Calu3 (cell line): ENCODE measurements at regions of chr1 and their contacts with region 1.

Region 1: DNA sequence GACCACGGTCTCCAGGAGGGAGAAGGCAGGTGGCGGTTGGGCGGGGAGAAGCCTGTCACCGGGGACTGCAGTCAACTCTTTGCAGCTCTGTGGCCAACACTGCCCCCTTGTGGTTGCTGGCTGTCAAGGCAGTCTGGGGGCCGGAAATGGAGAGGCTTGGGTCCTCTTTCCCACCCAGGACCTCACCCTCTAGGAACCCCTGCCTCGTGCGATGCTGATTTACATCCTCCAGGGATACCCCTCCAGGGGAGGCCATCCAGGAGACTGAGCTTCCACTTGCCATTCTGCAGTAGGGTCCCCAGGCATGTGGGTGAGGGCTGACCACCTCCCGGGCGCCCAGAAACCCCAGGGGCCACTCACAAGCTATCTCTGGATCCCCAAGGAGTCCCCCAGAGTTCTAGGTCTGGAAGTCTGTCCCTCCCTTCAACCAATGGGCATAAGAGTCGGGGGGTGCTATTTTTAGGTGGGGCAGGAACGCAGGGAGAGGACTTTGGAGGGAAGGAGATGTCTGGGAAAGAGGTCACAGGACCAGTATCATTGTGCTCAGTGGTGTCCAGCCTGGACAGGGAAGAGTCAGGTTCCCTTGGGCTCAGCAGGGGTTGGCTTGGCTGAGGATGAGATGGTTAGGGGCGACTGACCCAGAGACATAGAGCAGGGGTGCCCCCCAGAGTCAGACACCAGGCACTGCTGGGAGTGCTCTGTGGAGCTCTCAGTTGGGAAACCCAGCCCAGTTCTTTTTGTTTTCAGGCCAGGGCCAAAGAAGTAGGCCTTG is 7.1 kb upstream of the GPR61 start:
- DNase-seq: peak; percentile 82
- H3K4me3 Mint-ChIP-seq: no peak overlapping the region
- H3K27ac Mint-ChIP-seq: no peak overlapping the region
- H3K4me1 Mint-ChIP-seq: peaks cover 6% of the 10 kb centered on the region
- H3K27me3 Mint-ChIP-seq: peaks cover 42% of the 10 kb centered on the region
- CTCF ChIP-seq: peak; percentile 85

Region 2: DNA sequence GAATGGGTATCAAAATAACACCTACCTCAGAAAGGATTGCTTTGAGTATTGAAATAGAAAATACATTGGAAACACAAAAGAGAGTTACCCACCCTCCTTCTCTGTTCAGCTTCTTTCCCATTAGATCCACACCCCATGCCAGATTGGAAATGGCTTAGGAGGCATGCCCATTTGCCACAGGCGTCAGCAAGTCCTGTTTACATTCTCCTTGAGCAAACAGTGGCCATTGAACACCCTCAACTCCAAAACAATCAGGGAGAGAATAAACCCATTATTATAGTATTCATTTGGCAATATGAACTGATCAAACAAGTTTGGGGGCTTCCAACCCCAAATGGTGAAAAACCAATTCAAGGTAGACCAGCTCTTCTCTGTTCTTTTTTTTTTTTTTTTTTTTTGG is 416.2 kb before region 1 on chr1:
- CTCF ChIA-PET with region 1: no interaction called
- intact Hi-C with region 1: no loop called
- DNase-seq: no peak
- H3K4me3 Mint-ChIP-seq: no peak overlapping the region
- H3K27ac Mint-ChIP-seq: no peak overlapping the region
- H3K4me1 Mint-ChIP-seq: peaks cover 18% of the 10 kb centered on the region
- H3K27me3 Mint-ChIP-seq: peaks cover 41% of the 10 kb centered on the region
- CTCF ChIP-seq: no peak

Region 3: DNA sequence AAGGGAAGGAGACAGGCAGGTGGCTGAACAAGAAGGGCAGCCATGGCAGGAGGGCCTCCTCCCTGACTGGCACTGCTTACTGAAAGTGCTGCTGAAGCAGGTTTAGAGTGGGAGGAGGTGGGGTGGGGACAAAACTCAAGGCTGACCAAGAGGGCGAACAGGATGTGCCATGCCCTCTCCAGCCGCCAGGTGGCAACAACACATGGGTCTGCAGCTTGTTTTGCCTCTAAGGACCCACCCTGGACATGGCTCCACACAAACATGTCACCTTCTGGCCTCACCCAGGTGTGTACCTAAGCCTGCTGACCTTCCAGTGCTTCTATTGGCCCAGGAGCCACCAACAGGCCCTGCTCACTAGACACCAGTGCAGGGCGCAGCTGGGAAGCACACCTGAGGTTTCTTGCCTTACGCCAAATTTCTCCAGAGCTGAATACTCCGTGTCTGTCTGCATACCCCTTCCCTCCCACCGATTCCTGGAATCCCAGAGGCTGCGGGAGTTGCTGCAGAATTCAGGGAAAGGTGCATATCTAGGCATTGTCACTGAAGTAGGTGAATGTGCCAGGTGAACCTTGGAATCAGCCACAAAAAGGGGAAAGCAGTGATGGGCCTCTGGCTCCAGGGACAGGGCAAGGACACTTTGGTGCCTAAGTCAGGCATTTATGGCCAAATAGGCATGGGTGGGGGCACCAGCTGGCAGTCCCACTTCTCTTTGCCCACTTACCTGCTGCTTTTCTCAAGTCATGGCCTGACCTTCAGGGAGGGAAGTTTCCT is 254.9 kb before region 1 on chr1:
- CTCF ChIA-PET with region 1: interaction called, 4 read pairs
- intact Hi-C with region 1: loop called (anchors 2 kb)
- DNase-seq: peak; percentile 74
- H3K4me3 Mint-ChIP-seq: no peak overlapping the region
- H3K27ac Mint-ChIP-seq: peak overlapping the region; percentile 61
- H3K4me1 Mint-ChIP-seq: peaks cover 28% of the 10 kb centered on the region
- H3K27me3 Mint-ChIP-seq: no peaks in the 10 kb centered on the region
- CTCF ChIP-seq: peak; percentile 75

Region 4: GRCh38 chr1:109319114-109319513 is 213.4 kb before region 1 on chr1:
- CTCF ChIA-PET with region 1: no interaction called
- intact Hi-C with region 1: no loop called
- DNase-seq: no peak
- H3K4me3 Mint-ChIP-seq: no peak overlapping the region
- H3K27ac Mint-ChIP-seq: no peak overlapping the region
- H3K4me1 Mint-ChIP-seq: no peaks in the 10 kb centered on the region
- H3K27me3 Mint-ChIP-seq: no peaks in the 10 kb centered on the region
- CTCF ChIP-seq: no peak

Region 5: GRCh38 chr1:109426278-109427170 is 106.0 kb before region 1 on chr1 and contains the start of gene PSMA5:
- CTCF ChIA-PET with region 1: no interaction called
- intact Hi-C with region 1: loop called (anchors 2 kb)
- DNase-seq: peak; percentile 92
- H3K4me3 Mint-ChIP-seq: peak within 1 kb of the TSS; percentile 89
- H3K27ac Mint-ChIP-seq: peak within 1 kb of the TSS; percentile 89
- H3K4me1 Mint-ChIP-seq: peaks cover 22% of the 10 kb centered on the region
- H3K27me3 Mint-ChIP-seq: no peaks in the 10 kb centered on the region
- CTCF ChIP-seq: no peak
- total RNA-seq, gene PSMA5: 108 and 121 TPM in 2 replicates

Region 6: DNA sequence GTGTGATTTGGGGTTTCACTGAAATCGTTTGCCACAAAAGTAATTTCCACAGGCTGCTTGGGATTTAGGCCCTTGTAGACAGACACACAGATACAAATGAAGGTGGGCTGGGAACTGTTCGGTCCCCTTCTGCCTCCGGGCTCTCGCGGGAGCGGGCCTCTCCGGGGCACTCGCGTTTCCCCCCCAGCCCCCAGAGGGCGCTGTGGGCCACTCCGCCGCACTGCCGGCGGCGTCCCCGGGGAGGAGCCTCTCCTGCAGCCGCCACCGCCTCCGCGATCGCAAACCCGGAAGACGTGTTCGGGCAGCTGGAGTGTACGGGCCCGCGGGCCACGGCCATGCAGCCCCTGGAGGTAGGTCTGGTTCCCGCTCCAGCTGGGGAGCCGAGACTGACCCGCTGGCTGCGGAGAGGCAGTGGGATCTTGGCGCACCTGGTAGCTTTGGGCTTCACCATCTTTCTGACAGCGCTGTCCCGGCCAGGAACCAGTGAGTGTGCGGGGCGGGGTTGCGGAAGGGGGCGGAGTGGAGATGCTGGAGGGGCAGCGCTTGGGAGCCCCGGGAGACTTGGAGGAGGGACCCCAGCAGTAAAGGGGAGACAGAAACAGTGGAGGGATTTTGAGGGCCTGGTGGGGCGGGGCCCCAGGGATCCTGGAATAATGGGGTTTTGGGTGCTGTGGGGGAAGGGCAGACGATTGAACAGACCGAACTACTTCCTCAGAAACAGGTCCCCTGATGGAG is 38.6 kb before region 1 on chr1 and contains the start of gene CYB561D1:
- CTCF ChIA-PET with region 1: interaction called, 23 read pairs
- intact Hi-C with region 1: loop called (anchors 1 kb)
- DNase-seq: peak; percentile 90
- H3K4me3 Mint-ChIP-seq: peak within 1 kb of the TSS; percentile 98
- H3K27ac Mint-ChIP-seq: peak within 1 kb of the TSS; percentile 54
- H3K4me1 Mint-ChIP-seq: peaks cover 7% of the 10 kb centered on the region
- H3K27me3 Mint-ChIP-seq: no peaks in the 10 kb centered on the region
- CTCF ChIP-seq: peak; percentile 78
- total RNA-seq, gene CYB561D1: 9.0 and 9.6 TPM in 2 replicates

Region 7: DNA sequence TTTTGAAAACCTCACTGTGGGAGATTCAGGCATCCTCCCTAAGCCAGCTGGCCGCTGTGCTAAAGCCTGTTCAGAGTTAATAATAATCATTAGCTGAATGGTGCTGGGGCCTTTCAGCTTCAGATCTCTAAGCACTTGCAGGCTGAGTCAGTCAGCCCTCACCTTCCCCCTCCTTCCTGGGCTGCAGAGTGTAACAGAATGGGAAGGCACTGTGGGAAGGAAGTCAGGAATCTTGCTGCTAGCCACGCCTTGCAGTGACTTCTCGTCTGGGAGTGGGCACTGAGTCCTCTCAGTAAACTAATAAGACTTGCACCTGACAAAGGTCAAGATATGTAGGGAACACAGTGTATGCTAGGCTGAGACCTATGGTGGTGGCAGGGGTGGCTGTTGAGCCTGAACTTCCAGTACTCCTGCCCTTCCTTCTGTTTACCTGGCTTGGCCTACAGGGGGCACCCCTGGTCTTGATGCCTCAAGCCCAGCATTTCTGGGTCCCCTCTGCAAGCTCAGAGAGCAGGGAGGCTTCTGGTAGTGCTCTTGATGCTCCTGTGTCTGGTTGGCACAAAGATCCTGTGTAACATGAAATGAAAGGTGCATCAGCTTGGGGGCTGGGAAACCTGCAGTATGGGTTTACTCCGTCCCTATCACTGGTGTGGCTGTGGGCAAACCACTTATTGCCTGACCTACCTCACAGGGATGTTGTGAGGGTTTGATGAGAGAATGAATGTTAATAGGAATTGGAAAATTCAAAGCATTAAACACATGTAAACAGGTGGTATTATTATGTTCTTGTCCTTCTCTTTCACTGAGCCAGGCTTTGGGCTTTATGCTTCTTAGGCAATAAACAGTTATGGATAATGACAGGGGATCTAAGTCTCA is 32.7 kb before region 1 on chr1:
- CTCF ChIA-PET with region 1: interaction called, 15 read pairs
- intact Hi-C with region 1: no loop called
- DNase-seq: peak; percentile 64
- H3K4me3 Mint-ChIP-seq: no peak overlapping the region
- H3K27ac Mint-ChIP-seq: no peak overlapping the region
- H3K4me1 Mint-ChIP-seq: peaks cover 7% of the 10 kb centered on the region
- H3K27me3 Mint-ChIP-seq: no peaks in the 10 kb centered on the region
- CTCF ChIP-seq: peak; percentile 55